A549 (cell line): ENCODE measurements at regions of chr19 and their contacts with region 1.

Region 1: DNA sequence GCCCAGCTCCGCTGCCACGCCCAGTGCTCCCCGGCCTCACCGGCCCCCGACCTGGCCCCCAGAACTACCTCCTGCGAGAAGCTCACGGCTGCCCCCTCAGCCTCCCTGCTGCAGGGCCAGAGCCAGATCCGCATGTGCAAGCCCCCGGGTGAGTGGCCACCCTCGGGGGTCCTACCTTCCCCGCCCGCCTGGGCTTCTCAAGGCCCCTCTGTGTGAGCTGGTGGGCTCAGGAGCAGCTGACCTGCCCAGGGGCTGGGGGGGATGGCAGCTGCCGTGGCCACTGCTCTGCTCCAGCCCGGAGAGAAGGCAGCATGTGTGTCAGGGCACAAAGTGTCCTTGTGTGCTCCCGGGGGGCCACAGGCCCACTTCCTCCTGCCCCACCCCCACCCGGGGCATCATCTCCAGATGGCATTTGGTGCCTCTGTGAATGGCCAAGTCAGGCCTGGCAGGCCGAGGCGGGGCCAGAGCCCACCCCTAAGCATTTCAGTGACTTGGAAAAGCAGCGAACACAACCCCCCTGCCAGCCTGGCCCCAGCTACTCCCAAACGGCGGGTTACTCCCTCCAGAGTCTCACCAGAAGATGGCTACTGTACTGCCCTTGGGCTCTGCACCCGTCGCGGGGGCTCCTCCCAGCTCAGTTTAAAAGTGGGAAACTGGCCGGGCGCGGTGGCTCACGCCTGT is 7.3 kb downstream of the MIDN start:
- DNase-seq: no peak
- ATAC-seq: no peak
- H3K4me3 ChIP-seq: peak overlapping the region; percentile 25; the same call in 1 of the 3 replicates
- H3K27ac ChIP-seq: peak overlapping the region; percentile 100
- H3K4me1 ChIP-seq: peaks cover 70% of the 10 kb centered on the region
- CTCF ChIP-seq: no peak
- EP300 ChIP-seq: no peak
- POLR2A ChIP-seq: no peak
- RAD21 ChIP-seq: no peak

Region 2: GRCh38 chr19:1223018-1223855 is 32.5 kb before region 1 on chr19:
- CTCF ChIA-PET with region 1: interaction called, 10 read pairs
- POLR2A ChIA-PET with region 1: no interaction called
- DNase-seq: peak in 1 of 2 experiments; percentile 61
- ATAC-seq: peak; percentile 52 to 73; a peak in 4 of 6 replicates
- H3K4me3 ChIP-seq: no peak overlapping the region
- H3K27ac ChIP-seq: peak overlapping the region in 1 of 2 experiments; percentile 43; a peak in 2 of 6 replicates
- H3K4me1 ChIP-seq: peaks cover 14% of the 10 kb centered on the region; the same call in 1 of the 3 replicates
- CTCF ChIP-seq: peak; percentile 52; the same call in 2 of the 3 replicates
- EP300 ChIP-seq: no peak
- POLR2A ChIP-seq: no peak
- RAD21 ChIP-seq: peak; percentile 50 to 54

Region 3: GRCh38 chr19:1366899-1367870 is 111.5 kb after region 1 on chr19:
- CTCF ChIA-PET with region 1: no interaction called
- POLR2A ChIA-PET with region 1: no interaction called
- DNase-seq: no peak
- ATAC-seq: no peak
- H3K4me3 ChIP-seq: no peak overlapping the region
- H3K27ac ChIP-seq: no peak overlapping the region
- H3K4me1 ChIP-seq: peaks cover under 1% of the 10 kb centered on the region; the same call in 2 of the 3 replicates
- CTCF ChIP-seq: no peak
- EP300 ChIP-seq: no peak
- POLR2A ChIP-seq: no peak
- RAD21 ChIP-seq: no peak